Ovary (tissue), 10 donors: ENCODE measurements at regions of chr16 and their contacts with region 1.

Region 1: GRCh38 chr16:51968749-51969148 is 578.2 kb downstream of the TOX3 start:
- DNase-seq: no peak
- H3K4me3 ChIP-seq: no peak overlapping the region
- H3K27ac ChIP-seq: no peak overlapping the region
- H3K4me1 ChIP-seq: no peaks in the 10 kb centered on the region
- H3K27me3 ChIP-seq: no peaks in the 10 kb centered on the region
- CTCF ChIP-seq: no peak
- EP300 ChIP-seq: no peak
- POLR2A ChIP-seq: no peak

Region 2: GRCh38 chr16:52001996-52002395 is 33.2 kb after region 1 on chr16:
- intact Hi-C with region 1: loop called in 1 of 4 experiments (anchors 2 kb)
- DNase-seq: no peak
- H3K4me3 ChIP-seq: no peak overlapping the region
- H3K27ac ChIP-seq: no peak overlapping the region
- H3K4me1 ChIP-seq: no peaks in the 10 kb centered on the region
- H3K27me3 ChIP-seq: no peaks in the 10 kb centered on the region
- CTCF ChIP-seq: no peak
- EP300 ChIP-seq: no peak
- POLR2A ChIP-seq: no peak